Activated CD8-positive, alpha-beta T cell treated with anti-CD3 and anti-CD28 coated beads for 36 hours (primary cell): ENCODE measurements at regions of chr3 and their contacts with region 1.

Region 1: GRCh38 chr3:51391075-51391567 is at the start of gene RBM15B:
- DNase-seq: peak; percentile 98
- ATAC-seq: peak; percentile 96
- H3K4me3 Mint-ChIP-seq: peak within 1 kb of the TSS; percentile 83
- H3K27ac Mint-ChIP-seq: peak within 1 kb of the TSS; percentile 91
- H3K4me1 Mint-ChIP-seq: peaks cover 68% of the 10 kb centered on the region
- H3K27me3 Mint-ChIP-seq: no peaks in the 10 kb centered on the region
- CTCF ChIP-seq: peak; percentile 78
- total RNA-seq, gene RBM15B: 20.8 to 20.9 TPM

Region 2: GRCh38 chr3:51379301-51379700 is 11.8 kb before region 1 on chr3:
- CTCF ChIA-PET with region 1: interaction called, 17 read pairs
- POLR2A ChIA-PET with region 1: interaction called, 4 read pairs
- intact Hi-C with region 1: no loop called
- DNase-seq: no peak
- ATAC-seq: no peak
- H3K4me3 Mint-ChIP-seq: no peak overlapping the region
- H3K27ac Mint-ChIP-seq: no peak overlapping the region
- H3K4me1 Mint-ChIP-seq: peaks cover 14% of the 10 kb centered on the region
- H3K27me3 Mint-ChIP-seq: no peaks in the 10 kb centered on the region
- CTCF ChIP-seq: no peak

Region 3: GRCh38 chr3:51408813-51409212 is 17.7 kb after region 1 on chr3:
- CTCF ChIA-PET with region 1: interaction called, 6 read pairs
- POLR2A ChIA-PET with region 1: interaction called, 13 read pairs
- intact Hi-C with region 1: no loop called
- DNase-seq: no peak
- ATAC-seq: no peak
- H3K4me3 Mint-ChIP-seq: no peak overlapping the region
- H3K27ac Mint-ChIP-seq: no peak overlapping the region
- H3K4me1 Mint-ChIP-seq: peaks cover 13% of the 10 kb centered on the region
- H3K27me3 Mint-ChIP-seq: no peaks in the 10 kb centered on the region
- CTCF ChIP-seq: no peak